ENCODE measurements at regions of chr10 and their contacts with region 1.

Region 1: GRCh38 chr10:74826142-74827044 is at the start of gene KAT6B:
- DNase-seq: peak; percentile 93 to 100 (median 100)
- ATAC-seq: peak; percentile 86
- H3K4me3 ChIP-seq: peak within 1 kb of the TSS; percentile 86
- H3K4me3 Mint-ChIP-seq: peak within 1 kb of the TSS; percentile 90 to 98 (median 92)
- H3K27ac ChIP-seq: peak within 1 kb of the TSS; percentile 98
- H3K27ac Mint-ChIP-seq: peak within 1 kb of the TSS; percentile 92 to 99 (median 98)
- H3K4me1 ChIP-seq: peaks cover 22 to 50% of the 10 kb centered on the region in 2 donors
- H3K4me1 Mint-ChIP-seq: peaks cover 44 to 74% (median 69%) of the 10 kb centered on the region in 7 donors
- H3K27me3 ChIP-seq: no peaks in the 10 kb centered on the region
- H3K27me3 Mint-ChIP-seq: no peaks in the 10 kb centered on the region
- total RNA-seq, gene KAT6B: 33.2 to 80.5 (median 68.5) TPM

Region 2: GRCh38 chr10:73997787-73998622 is 828.4 kb before region 1 on chr10 and contains the start of gene VCL:
- CTCF ChIA-PET with region 1: no interaction called
- POLR2A ChIA-PET with region 1: no interaction called
- intact Hi-C with region 1: loop called (anchors 1 kb)
- DNase-seq: peak; percentile 90 to 97 (median 95)
- ATAC-seq: peak; percentile 99
- H3K4me3 ChIP-seq: peak within 1 kb of the TSS; percentile 71
- H3K4me3 Mint-ChIP-seq: peak within 1 kb of the TSS; percentile 83 to 100 (median 97)
- H3K27ac ChIP-seq: peak within 1 kb of the TSS; percentile 91
- H3K27ac Mint-ChIP-seq: peak within 1 kb of the TSS; percentile 83 to 99 (median 98)
- H3K4me1 ChIP-seq: peaks cover 19 to 22% of the 10 kb centered on the region in 2 donors
- H3K4me1 Mint-ChIP-seq: peaks cover 43 to 53% (median 48%) of the 10 kb centered on the region in 7 donors
- H3K27me3 ChIP-seq: no peaks in the 10 kb centered on the region
- H3K27me3 Mint-ChIP-seq: no peaks in the 10 kb centered on the region
- total RNA-seq, gene VCL: 9.0 to 67.7 (median 21.6) TPM

Region 3: GRCh38 chr10:74262856-74263255 is 563.5 kb before region 1 on chr10:
- CTCF ChIA-PET with region 1: no interaction called
- POLR2A ChIA-PET with region 1: no interaction called
- intact Hi-C with region 1: loop called (anchors 2 to 5 kb)
- DNase-seq: no peak
- ATAC-seq: no peak
- H3K4me3 ChIP-seq: no peak overlapping the region
- H3K4me3 Mint-ChIP-seq: no peak overlapping the region
- H3K27ac ChIP-seq: no peak overlapping the region
- H3K27ac Mint-ChIP-seq: peak overlapping the region in 1 of 9 donors; percentile 28
- H3K4me1 ChIP-seq: no peaks in the 10 kb centered on the region
- H3K4me1 Mint-ChIP-seq: peaks cover 4 to 24% (median 11%) of the 10 kb centered on the region in 7 donors
- H3K27me3 ChIP-seq: no peaks in the 10 kb centered on the region
- H3K27me3 Mint-ChIP-seq: no peaks in the 10 kb centered on the region

Region 4: GRCh38 chr10:74431816-74432215 is 394.6 kb before region 1 on chr10:
- CTCF ChIA-PET with region 1: no interaction called
- POLR2A ChIA-PET with region 1: no interaction called
- intact Hi-C with region 1: no loop called
- DNase-seq: no peak
- ATAC-seq: no peak
- H3K4me3 ChIP-seq: no peak overlapping the region
- H3K4me3 Mint-ChIP-seq: no peak overlapping the region
- H3K27ac ChIP-seq: no peak overlapping the region
- H3K27ac Mint-ChIP-seq: no peak overlapping the region
- H3K4me1 ChIP-seq: no peaks in the 10 kb centered on the region
- H3K4me1 Mint-ChIP-seq: peaks cover 0 to 12% (median 0%) of the 10 kb centered on the region in 7 donors
- H3K27me3 ChIP-seq: no peaks in the 10 kb centered on the region
- H3K27me3 Mint-ChIP-seq: no peaks in the 10 kb centered on the region

Region 5: GRCh38 chr10:74738985-74739567 is 87.3 kb before region 1 on chr10:
- CTCF ChIA-PET with region 1: no interaction called
- POLR2A ChIA-PET with region 1: no interaction called
- intact Hi-C with region 1: loop called (anchors 2 kb)
- DNase-seq: peak in 7 of 9 donors; percentile 4 to 40 (median 17)
- ATAC-seq: peak; percentile 73
- H3K4me3 ChIP-seq: no peak overlapping the region
- H3K4me3 Mint-ChIP-seq: peak overlapping the region in 9 of 10 donors; percentile 17 to 56 (median 34)
- H3K27ac ChIP-seq: no peak overlapping the region
- H3K27ac Mint-ChIP-seq: peak overlapping the region; percentile 44 to 87 (median 58)
- H3K4me1 ChIP-seq: peaks cover 7 to 15% of the 10 kb centered on the region in 2 donors
- H3K4me1 Mint-ChIP-seq: peaks cover 15 to 26% (median 17%) of the 10 kb centered on the region in 7 donors
- H3K27me3 ChIP-seq: no peaks in the 10 kb centered on the region
- H3K27me3 Mint-ChIP-seq: no peaks in the 10 kb centered on the region

Region 6: DNA sequence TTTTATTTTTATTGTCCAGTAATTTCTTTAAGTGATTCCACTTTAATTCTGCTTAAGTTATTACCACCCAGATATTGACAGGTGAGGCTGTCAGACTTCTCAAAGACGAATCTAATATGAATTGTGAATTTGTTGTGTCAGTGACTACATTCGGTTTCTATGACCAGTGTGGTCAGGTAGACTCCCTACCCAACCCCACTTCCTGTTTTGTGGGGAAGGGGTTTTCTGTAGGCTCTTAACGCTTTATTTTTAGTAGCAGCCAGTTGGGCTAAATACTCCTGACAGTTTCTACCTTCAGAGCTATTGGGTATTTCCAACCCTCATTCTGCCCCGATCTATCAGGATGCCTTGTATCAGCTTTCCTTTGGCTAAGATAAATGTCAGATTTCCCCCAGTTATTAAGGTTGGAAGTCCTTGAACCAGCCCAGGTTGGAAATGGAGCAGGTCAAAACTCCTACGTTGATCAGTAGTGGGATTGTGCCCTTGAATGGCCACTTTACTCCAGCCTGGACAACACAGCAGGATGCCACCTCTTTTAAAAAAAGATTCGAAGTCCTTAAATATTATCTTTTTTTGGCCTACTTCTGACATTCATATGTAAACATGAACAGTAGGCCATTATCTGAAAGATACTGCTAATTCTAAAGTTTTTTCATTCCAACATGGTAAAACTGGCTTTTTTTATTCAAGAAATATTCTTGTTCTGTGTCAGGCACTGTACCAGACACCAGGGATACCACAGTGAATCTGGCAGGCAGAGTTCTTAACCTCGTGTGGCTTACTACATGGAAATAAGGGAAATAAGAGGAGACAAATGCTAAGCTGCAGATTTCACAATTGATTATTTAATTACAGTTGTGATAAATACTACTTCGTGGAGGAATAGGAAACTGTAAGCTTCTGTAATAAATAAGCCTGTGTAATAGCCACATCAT is 151.8 kb after region 1 on chr10:
- CTCF ChIA-PET with region 1: no interaction called
- POLR2A ChIA-PET with region 1: interaction called, 3 read pairs
- intact Hi-C with region 1: loop called in 1 of 2 experiments (anchors 1 kb)
- DNase-seq: peak in 7 of 9 donors; percentile 11 to 68 (median 46)
- ATAC-seq: peak; percentile 93
- H3K4me3 ChIP-seq: no peak overlapping the region
- H3K4me3 Mint-ChIP-seq: peak overlapping the region in 6 of 10 donors; percentile 18 to 71 (median 44)
- H3K27ac ChIP-seq: no peak overlapping the region
- H3K27ac Mint-ChIP-seq: peak overlapping the region in 4 of 9 donors; percentile 45 to 82 (median 55)
- H3K4me1 ChIP-seq: peaks cover 13 to 19% of the 10 kb centered on the region in 2 donors
- H3K4me1 Mint-ChIP-seq: peaks cover 19 to 42% (median 32%) of the 10 kb centered on the region in 7 donors
- H3K27me3 ChIP-seq: no peaks in the 10 kb centered on the region
- H3K27me3 Mint-ChIP-seq: no peaks in the 10 kb centered on the region

Region 7: DNA sequence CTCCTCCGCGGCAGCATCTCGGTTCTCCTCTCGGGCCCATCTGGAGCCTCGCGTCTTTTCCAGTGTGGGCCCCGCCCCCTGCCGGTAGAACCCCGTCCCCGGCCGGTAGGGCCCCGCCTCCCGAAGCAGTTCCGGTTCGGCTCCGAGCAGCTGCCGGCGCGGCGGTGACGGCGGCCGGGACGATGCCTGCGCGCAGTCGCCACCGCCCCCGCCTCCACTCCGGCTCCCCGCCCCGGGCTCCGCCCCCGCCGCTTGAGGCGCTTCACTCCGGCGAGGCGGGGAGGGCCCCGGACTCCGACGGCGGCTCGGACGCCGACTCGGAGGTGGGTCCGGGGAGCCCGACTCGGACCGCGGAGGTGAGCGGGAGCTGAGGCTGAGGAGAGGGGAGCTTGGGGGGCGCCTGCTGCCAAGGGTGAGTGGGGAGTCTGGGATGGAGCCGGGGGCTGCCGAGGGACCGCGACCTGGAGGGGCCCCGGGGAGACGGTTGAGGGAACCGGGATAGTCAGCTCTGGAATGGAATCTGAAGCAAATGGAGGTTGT is 285.0 kb after region 1 on chr10 and contains the start of gene SAMD8:
- CTCF ChIA-PET with region 1: no interaction called
- POLR2A ChIA-PET with region 1: interaction called, 4 read pairs
- intact Hi-C with region 1: loop called in 1 of 2 experiments (anchors 1 kb)
- DNase-seq: peak; percentile 90 to 98 (median 94)
- ATAC-seq: peak; percentile 92
- H3K4me3 ChIP-seq: peak within 1 kb of the TSS; percentile 90
- H3K4me3 Mint-ChIP-seq: peak within 1 kb of the TSS; percentile 81 to 98 (median 90)
- H3K27ac ChIP-seq: peak within 1 kb of the TSS; percentile 89
- H3K27ac Mint-ChIP-seq: peak within 1 kb of the TSS; percentile 86 to 98 (median 94)
- H3K4me1 ChIP-seq: peaks cover 14 to 16% of the 10 kb centered on the region in 2 donors
- H3K4me1 Mint-ChIP-seq: peaks cover 33 to 66% (median 62%) of the 10 kb centered on the region in 7 donors
- H3K27me3 ChIP-seq: no peaks in the 10 kb centered on the region
- H3K27me3 Mint-ChIP-seq: no peaks in the 10 kb centered on the region
- total RNA-seq, gene SAMD8: 14.8 to 31.7 (median 17.5) TPM

Region 8: GRCh38 chr10:75229971-75230370 is 403.6 kb after region 1 on chr10:
- CTCF ChIA-PET with region 1: no interaction called
- POLR2A ChIA-PET with region 1: interaction called, 3 read pairs
- intact Hi-C with region 1: loop called (anchors 1 kb)
- DNase-seq: no peak
- ATAC-seq: no peak
- H3K4me3 ChIP-seq: no peak overlapping the region
- H3K4me3 Mint-ChIP-seq: no peak overlapping the region
- H3K27ac ChIP-seq: peak overlapping the region; percentile 52
- H3K27ac Mint-ChIP-seq: peak overlapping the region in 8 of 9 donors; percentile 49 to 97 (median 88)
- H3K4me1 ChIP-seq: peaks cover 5 to 8% of the 10 kb centered on the region in 2 donors
- H3K4me1 Mint-ChIP-seq: peaks cover 17 to 52% (median 41%) of the 10 kb centered on the region in 7 donors
- H3K27me3 ChIP-seq: no peaks in the 10 kb centered on the region
- H3K27me3 Mint-ChIP-seq: no peaks in the 10 kb centered on the region

Region 9: DNA sequence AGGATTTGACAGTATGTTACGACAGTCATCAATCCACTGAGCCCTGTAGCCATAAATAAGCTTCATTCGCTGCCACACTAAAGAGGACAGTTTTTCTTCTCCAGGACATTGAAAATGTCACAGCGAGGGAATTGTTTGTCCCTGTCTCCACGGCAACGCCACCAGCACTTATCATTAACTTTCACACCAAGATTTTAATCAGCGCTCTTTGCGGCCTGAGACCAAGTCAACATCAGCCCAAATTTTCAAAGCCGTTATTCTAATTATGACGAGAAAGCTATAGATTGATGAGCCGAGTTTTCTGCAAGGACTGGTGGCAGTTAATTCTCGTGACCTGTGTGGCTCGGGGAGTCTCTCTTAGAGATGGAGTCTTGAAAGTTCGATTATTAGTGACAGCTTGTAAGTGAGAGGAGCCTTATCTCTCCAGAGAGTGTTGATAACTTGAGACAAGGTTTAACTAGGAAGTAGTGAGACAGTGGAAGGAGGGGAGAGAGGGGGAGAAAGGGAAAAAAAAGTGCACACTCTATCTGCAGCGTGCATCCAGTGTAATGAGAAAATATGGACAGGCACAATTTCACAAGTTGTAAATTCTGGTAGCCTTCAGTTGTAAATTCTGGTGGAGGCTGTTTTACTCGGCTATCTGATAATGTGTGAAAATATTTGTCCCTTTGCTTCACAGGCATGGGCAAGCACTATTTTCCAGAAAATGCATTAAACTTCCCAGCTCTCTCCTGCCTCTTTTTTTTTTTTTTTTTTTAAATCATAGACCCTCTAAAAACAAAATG is 1078.3 kb after region 1 on chr10:
- CTCF ChIA-PET with region 1: no interaction called
- POLR2A ChIA-PET with region 1: no interaction called
- intact Hi-C with region 1: no loop called
- DNase-seq: no peak
- ATAC-seq: peak; percentile 36
- H3K4me3 ChIP-seq: no peak overlapping the region
- H3K4me3 Mint-ChIP-seq: no peak overlapping the region
- H3K27ac ChIP-seq: no peak overlapping the region
- H3K27ac Mint-ChIP-seq: no peak overlapping the region
- H3K4me1 ChIP-seq: no peaks in the 10 kb centered on the region
- H3K4me1 Mint-ChIP-seq: peaks cover 0 to 4% (median 0%) of the 10 kb centered on the region in 7 donors
- H3K27me3 ChIP-seq: no peaks in the 10 kb centered on the region
- H3K27me3 Mint-ChIP-seq: peaks cover 17 to 51% (median 24%) of the 10 kb centered on the region in 5 donors